Sigmoid colon (tissue), 7 donors: ENCODE measurements at regions of chr5 and their contacts with region 1.

Region 1: DNA sequence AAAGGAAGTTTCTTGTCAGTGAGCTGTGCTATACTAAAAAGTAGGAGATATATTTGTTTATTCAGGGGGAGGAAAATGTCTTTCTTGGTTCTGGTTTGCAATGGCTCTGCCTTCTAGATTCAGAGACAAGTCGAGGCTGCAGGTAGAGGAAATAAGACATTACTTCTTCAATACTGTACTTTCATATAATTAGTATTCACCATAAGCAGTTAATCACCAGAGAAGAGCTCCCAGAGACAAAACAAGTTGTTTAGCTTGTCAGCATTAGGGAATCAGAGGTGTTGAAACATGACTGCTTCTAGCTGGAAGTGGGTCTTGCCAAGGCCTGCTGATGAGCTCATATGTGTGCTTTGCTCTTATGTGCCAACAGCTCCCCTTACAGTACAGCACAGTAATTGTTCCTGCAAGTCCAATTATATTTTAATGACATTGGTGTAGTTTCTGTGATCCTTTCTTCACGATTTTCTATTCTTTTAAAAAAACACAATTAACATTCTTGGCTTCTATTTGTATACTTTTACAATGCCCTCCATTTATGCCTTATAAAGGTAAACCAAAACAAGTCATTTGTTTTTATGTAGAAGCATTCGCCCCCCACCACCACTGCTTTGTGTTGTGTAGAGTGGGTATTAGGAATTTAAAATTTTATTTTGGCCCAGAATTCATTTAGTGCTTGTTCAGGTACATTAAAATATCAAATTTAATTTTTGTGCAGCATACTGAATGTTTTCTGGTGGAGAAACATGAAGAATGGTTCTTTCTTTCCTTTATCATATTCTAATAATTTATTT is 112.2 kb downstream of the RPS23 start:
- DNase-seq: peak; percentile 93
- H3K4me3 ChIP-seq: no peak overlapping the region
- H3K27ac ChIP-seq: peak overlapping the region; percentile 60 to 66 (median 63)
- H3K4me1 ChIP-seq: peaks cover 0 to 32% (median 18%) of the 10 kb centered on the region in 4 donors
- H3K27me3 ChIP-seq: no peaks in the 10 kb centered on the region
- CTCF ChIP-seq: peak; percentile 69 to 82 (median 73)
- EP300 ChIP-seq: no peak
- POLR2A ChIP-seq: no peak

Region 2: GRCh38 chr5:81301271-81302015 is 864.5 kb before region 1 on chr5 and contains the start of gene ZCCHC9:
- intact Hi-C with region 1: loop called (anchors 5 kb)
- DNase-seq: peak; percentile 97
- H3K4me3 ChIP-seq: peak within 1 kb of the TSS; percentile 60 to 89 (median 76)
- H3K27ac ChIP-seq: peak within 1 kb of the TSS; percentile 85 to 92 (median 90)
- H3K4me1 ChIP-seq: peaks cover 0 to 46% (median 31%) of the 10 kb centered on the region in 4 donors
- H3K27me3 ChIP-seq: no peaks in the 10 kb centered on the region
- CTCF ChIP-seq: no peak
- EP300 ChIP-seq: no peak
- POLR2A ChIP-seq: peak; percentile 71 to 83
- total RNA-seq, gene ZCCHC9: 20.2 to 44.9 (median 29.6) TPM

Region 3: GRCh38 chr5:81425569-81425968 is 740.4 kb before region 1 on chr5:
- intact Hi-C with region 1: loop called (anchors 1 kb)
- DNase-seq: no peak
- H3K4me3 ChIP-seq: no peak overlapping the region
- H3K27ac ChIP-seq: peak overlapping the region in 2 of 4 donors; percentile 35 to 52
- H3K4me1 ChIP-seq: peaks cover 0 to 38% (median 25%) of the 10 kb centered on the region in 4 donors
- H3K27me3 ChIP-seq: no peaks in the 10 kb centered on the region
- CTCF ChIP-seq: peak; percentile 37 to 68 (median 44)
- EP300 ChIP-seq: no peak
- POLR2A ChIP-seq: no peak

Region 4: GRCh38 chr5:81506900-81507588 is 658.9 kb before region 1 on chr5:
- intact Hi-C with region 1: loop called (anchors 2 kb)
- DNase-seq: peak; percentile 76
- H3K4me3 ChIP-seq: no peak overlapping the region
- H3K27ac ChIP-seq: peak overlapping the region in 2 of 4 donors; percentile 20 to 63
- H3K4me1 ChIP-seq: peaks cover 0 to 22% (median 3%) of the 10 kb centered on the region in 4 donors
- H3K27me3 ChIP-seq: no peaks in the 10 kb centered on the region
- CTCF ChIP-seq: peak; percentile 71 to 87 (median 78)
- EP300 ChIP-seq: no peak
- POLR2A ChIP-seq: no peak

Region 5: GRCh38 chr5:81751009-81751835 is 414.7 kb before region 1 on chr5 and contains the start of gene SSBP2:
- intact Hi-C with region 1: loop called (anchors 5 kb)
- DNase-seq: peak; percentile 100
- H3K4me3 ChIP-seq: peak within 1 kb of the TSS; percentile 82 to 95 (median 86)
- H3K27ac ChIP-seq: peak within 1 kb of the TSS; percentile 95 to 100 (median 98)
- H3K4me1 ChIP-seq: peaks cover 0 to 62% (median 44%) of the 10 kb centered on the region in 4 donors
- H3K27me3 ChIP-seq: no peaks in the 10 kb centered on the region
- CTCF ChIP-seq: no peak
- EP300 ChIP-seq: peak in 3 of 4 donors; percentile 73 to 90 (median 80)
- POLR2A ChIP-seq: peak; percentile 64 to 67
- total RNA-seq, gene SSBP2: 68.7 to 89.2 (median 84.6) TPM

Region 6: GRCh38 chr5:81971712-81972495 is 194.0 kb before region 1 on chr5 and contains the start of gene ATG10:
- intact Hi-C with region 1: loop called (anchors 5 kb)
- DNase-seq: peak; percentile 96
- H3K4me3 ChIP-seq: peak within 1 kb of the TSS; percentile 69 to 87 (median 70)
- H3K27ac ChIP-seq: peak within 1 kb of the TSS; percentile 95 to 99 (median 98)
- H3K4me1 ChIP-seq: peaks cover 0 to 19% (median 6%) of the 10 kb centered on the region in 4 donors
- H3K27me3 ChIP-seq: no peaks in the 10 kb centered on the region
- CTCF ChIP-seq: no peak
- EP300 ChIP-seq: no peak
- POLR2A ChIP-seq: peak; percentile 88 to 93
- total RNA-seq, gene ATG10: 6.4 to 13.2 (median 10.7) TPM